ENCODE measurements at regions of chr17 and their contacts with region 1.

Region 1: DNA sequence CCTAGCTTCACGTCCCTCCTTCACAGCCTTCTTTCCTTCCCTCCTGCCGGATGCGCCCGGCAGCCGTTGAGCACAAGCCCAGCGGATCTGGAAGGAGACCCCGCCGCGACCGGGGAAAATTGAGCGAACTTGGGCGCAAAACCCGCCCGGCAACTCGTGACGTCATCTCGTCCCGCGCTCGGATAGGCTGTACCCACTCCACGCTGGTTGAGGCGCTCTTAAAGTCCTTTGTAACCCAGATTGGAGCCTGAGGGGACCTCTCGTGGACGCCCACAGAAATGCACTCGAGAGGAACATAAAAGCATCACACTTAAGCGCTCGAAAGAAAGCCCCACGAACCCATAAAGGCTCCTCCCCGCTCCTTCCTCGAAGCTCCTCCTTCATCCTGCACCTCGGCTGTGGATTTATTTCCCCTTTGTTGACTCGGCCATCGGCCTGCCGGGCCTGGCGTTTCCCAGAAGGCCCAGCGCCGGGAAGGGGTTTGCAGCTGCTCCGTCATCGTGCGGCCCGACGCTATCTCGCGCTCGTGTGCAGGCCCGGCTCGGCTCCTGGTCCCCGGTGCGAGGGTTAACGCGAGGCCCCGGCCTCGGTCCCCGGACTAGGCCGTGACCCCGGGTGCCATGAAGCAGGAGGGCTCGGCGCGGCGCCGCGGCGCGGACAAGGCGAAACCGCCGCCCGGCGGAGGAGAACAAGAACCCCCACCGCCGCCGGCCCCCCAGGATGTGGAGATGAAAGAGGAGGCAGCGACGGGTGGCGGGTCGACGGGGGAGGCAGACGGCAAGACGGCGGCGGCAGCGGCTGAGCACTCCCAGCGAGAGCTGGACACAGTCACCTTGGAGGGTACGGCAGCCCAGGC is at the start of gene PSMD3:
- DNase-seq: peak; percentile 99
- H3K4me3 Mint-ChIP-seq: peak within 1 kb of the TSS; percentile 96
- H3K27ac Mint-ChIP-seq: peak within 1 kb of the TSS; percentile 98
- H3K4me1 Mint-ChIP-seq: peaks cover 26% of the 10 kb centered on the region
- H3K27me3 Mint-ChIP-seq: no peaks in the 10 kb centered on the region
- CTCF ChIP-seq: peak; percentile 50
- total RNA-seq, gene PSMD3: 74.2 and 95.3 TPM in 2 replicates

Region 2: DNA sequence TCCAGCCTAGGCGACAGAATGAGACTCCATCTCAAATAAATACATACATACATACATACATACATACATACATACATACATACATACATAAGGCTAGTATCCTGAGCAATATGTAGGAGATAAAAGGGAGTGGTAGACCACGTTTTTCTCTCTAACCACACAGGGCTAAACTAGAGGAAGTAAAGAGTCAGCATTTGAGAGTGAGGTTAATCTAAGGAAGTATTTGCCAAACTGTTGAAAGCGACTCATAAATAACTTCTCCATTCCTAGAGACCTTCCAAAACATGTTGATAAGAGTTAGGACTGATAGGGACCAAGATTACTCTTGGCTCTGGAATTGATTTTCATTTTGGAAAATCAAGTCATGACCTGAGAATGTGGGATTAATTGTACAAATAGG is 441.7 kb before region 1 on chr17:
- CTCF ChIA-PET with region 1: no interaction called
- POLR2A ChIA-PET with region 1: no interaction called
- intact Hi-C with region 1: no loop called
- DNase-seq: no peak
- H3K4me3 Mint-ChIP-seq: no peak overlapping the region
- H3K27ac Mint-ChIP-seq: no peak overlapping the region
- H3K4me1 Mint-ChIP-seq: no peaks in the 10 kb centered on the region
- H3K27me3 Mint-ChIP-seq: no peaks in the 10 kb centered on the region
- CTCF ChIP-seq: no peak

Region 3: GRCh38 chr17:39872751-39873150 is 107.8 kb before region 1 on chr17:
- CTCF ChIA-PET with region 1: interaction called, 8 read pairs
- POLR2A ChIA-PET with region 1: interaction called, 8 read pairs
- intact Hi-C with region 1: loop called (anchors 1 kb)
- DNase-seq: peak; percentile 24
- H3K4me3 Mint-ChIP-seq: no peak overlapping the region
- H3K27ac Mint-ChIP-seq: no peak overlapping the region
- H3K4me1 Mint-ChIP-seq: no peaks in the 10 kb centered on the region
- H3K27me3 Mint-ChIP-seq: peaks cover 41% of the 10 kb centered on the region
- CTCF ChIP-seq: no peak

Region 4: GRCh38 chr17:39952680-39953470 is 27.7 kb before region 1 on chr17:
- CTCF ChIA-PET with region 1: interaction called, 69 read pairs
- POLR2A ChIA-PET with region 1: interaction called, 35 read pairs
- intact Hi-C with region 1: no loop called
- DNase-seq: peak; percentile 92
- H3K4me3 Mint-ChIP-seq: peak overlapping the region; percentile 62
- H3K27ac Mint-ChIP-seq: no peak overlapping the region
- H3K4me1 Mint-ChIP-seq: no peaks in the 10 kb centered on the region
- H3K27me3 Mint-ChIP-seq: peaks cover 22% of the 10 kb centered on the region
- CTCF ChIP-seq: no peak

Region 5: DNA sequence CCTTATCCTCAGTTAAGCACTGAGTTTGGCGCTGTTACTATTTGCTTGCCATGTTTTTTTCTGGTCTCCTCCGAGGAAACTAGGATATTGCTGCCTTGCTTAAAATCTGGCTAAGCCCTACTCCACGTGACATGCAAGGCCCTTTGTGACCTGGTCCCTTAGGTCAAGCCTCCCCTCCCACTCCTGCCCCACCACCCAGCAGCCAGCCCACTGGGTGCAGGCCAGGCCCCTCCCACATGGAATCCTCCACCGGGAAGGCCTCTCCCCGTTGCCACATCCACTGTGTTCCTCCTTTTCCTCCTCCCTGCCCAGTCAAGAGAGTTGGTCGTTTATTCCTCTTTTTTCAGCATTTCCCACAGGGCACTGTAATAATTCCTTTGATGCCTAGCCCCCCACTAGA is 16.2 kb after region 1 on chr17:
- CTCF ChIA-PET with region 1: interaction called, 3 read pairs
- POLR2A ChIA-PET with region 1: interaction called, 11 read pairs
- intact Hi-C with region 1: no loop called
- DNase-seq: no peak
- H3K4me3 Mint-ChIP-seq: no peak overlapping the region
- H3K27ac Mint-ChIP-seq: no peak overlapping the region
- H3K4me1 Mint-ChIP-seq: peaks cover 13% of the 10 kb centered on the region
- H3K27me3 Mint-ChIP-seq: no peaks in the 10 kb centered on the region
- CTCF ChIP-seq: no peak

Region 6: DNA sequence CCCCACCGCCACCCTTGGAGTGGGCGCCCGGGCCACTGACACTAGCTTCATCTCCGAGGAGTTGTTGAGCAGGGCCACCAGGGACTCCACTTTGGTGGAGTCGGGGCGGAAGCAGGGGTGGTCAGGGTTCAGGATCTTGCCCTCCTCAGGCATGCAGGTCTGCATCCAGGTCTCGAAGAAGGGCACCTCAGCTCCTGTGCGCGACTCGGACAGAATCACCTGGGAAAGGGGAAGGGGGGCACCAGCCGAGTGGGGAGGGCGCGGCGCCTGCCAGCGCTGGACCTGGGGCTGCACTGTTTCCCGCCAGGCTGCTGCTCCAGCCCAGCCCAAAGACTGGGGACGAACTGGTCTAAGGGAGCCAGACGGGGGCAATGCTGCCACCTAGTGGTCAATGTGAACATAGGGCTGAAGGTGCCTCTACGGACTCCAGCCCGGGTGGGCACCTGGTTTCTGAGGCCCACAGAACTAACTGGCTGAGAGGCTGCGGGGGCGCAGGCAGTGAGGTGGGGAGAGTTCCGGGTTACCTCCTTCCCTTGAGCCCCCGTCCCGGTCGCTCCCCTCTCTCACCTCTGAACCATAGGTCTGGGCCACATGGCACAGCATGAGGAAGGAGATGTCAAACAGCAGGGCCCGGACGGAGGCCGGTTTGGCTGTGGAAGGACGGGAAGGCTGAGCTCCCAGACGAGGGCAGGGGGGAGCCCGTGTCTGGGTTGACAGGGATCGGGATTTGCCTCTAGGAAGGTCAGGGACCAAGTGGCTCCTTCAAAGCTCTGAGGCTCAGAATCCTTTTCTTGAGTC is 46.4 kb after region 1 on chr17:
- CTCF ChIA-PET with region 1: interaction called, 4 read pairs
- POLR2A ChIA-PET with region 1: interaction called, 30 read pairs
- intact Hi-C with region 1: loop called (anchors 1 kb)
- DNase-seq: peak; percentile 95
- H3K4me3 Mint-ChIP-seq: peak overlapping the region; percentile 52
- H3K27ac Mint-ChIP-seq: peak overlapping the region; percentile 87
- H3K4me1 Mint-ChIP-seq: peaks cover 47% of the 10 kb centered on the region
- H3K27me3 Mint-ChIP-seq: no peaks in the 10 kb centered on the region
- CTCF ChIP-seq: peak; percentile 91

Region 7: GRCh38 chr17:40075942-40076498 is 95.4 kb after region 1 on chr17:
- CTCF ChIA-PET with region 1: no interaction called
- POLR2A ChIA-PET with region 1: no interaction called
- intact Hi-C with region 1: no loop called
- DNase-seq: no peak
- H3K4me3 Mint-ChIP-seq: peak overlapping the region; percentile 65
- H3K27ac Mint-ChIP-seq: peak overlapping the region; percentile 36
- H3K4me1 Mint-ChIP-seq: peaks cover 56% of the 10 kb centered on the region
- H3K27me3 Mint-ChIP-seq: no peaks in the 10 kb centered on the region
- CTCF ChIP-seq: no peak

Measured in MCF 10A (cell line).